ENCODE measurements at regions of chr14 and their contacts with region 1.

Region 1: DNA sequence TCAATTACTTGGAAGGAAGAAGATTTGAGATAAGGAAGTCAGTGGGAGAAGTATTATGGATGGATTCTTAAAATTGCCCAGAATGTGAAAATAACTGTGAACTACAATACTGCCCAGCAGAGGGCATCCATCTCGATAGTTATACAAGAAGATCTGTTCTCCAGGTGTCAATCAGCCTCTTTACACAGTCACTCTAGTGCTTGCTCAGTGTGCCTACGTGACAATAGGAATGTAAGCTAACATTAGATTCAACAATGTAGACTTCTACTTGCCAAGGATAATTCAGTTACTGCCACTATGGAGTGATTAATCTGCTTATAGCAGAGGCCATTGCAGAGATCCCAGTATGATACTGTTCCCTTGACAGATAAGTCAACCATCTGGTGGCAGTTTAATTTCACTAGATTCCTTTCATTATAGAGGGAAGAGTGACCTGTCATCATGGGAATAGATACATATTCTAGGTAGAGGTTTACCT is 10.6 kb upstream of the MAP4K5 start:
- DNase-seq: peak; percentile 66
- CTCF ChIP-seq: peak; percentile 36

Region 2: GRCh38 chr14:50773632-50774541 is 230.9 kb after region 1 on chr14:
- in situ Hi-C with region 1: loop called (anchors 10 kb)
- DNase-seq: peak; percentile 49
- CTCF ChIP-seq: peak; percentile 77